ENCODE measurements at regions of chr1 and their contacts with region 1.

Region 1: DNA sequence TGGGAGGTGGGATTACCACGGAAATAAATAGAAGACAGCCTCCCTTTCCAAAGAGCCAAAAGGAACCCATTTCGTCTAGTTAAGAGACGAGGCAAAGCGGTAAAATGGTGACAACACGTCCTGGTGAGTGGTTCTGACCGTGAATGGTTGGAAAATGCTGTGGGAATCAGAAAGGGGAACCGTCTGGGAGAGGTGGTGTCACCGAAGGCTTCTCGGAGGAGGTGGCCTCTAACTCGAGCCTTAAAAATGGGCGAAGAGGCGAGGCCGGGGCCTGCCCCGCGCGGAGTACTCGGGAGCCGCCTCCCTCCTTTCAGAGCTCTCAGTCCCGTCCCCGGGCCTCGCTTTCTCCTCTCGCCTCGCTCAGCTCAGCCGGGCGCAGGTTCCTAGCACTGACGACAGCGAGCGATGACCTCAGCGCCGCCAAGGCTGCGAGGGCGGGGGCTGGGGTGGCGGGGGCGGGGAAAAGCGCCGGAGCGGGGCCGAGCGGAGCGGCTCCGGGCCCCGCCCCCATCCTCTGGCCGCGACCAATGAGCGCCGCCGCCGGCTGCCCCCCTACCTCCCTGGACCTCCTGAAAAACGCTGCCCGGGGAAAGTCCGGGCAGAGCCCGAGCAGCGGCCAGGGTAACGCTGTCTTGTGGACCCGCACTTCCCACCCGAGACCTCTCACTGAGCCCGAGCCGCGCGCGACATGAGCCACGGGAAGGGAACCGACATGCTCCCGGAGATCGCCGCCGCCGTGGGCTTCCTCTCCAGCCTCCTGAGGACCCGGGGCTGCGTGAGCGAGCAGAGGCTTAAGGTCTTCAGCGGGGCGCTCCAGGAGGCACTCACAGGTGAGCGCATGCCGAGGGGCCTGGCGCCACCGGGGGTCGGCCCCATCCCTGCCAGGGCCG is at the start of gene BTG2:
- DNase-seq: peak; percentile 66
- ATAC-seq: peak; percentile 92
- H3K4me3 ChIP-seq: peak within 1 kb of the TSS; percentile 70 to 87 (median 71)
- H3K27ac ChIP-seq: peak within 1 kb of the TSS; percentile 48
- H3K4me1 ChIP-seq: peaks cover 43% of the 10 kb centered on the region
- H3K27me3 ChIP-seq: peaks cover 0 to 23% of the 10 kb centered on the region in 2 experiments; a peak in 3 of 5 replicates
- CTCF ChIP-seq: peak; percentile 21; the same call in 1 of the 2 replicates
- EP300 ChIP-seq: no peak
- POLR2A ChIP-seq: peak; percentile 95 to 99
- RAD21 ChIP-seq: no peak; the same call in 1 of the 2 replicates
- total RNA-seq, gene BTG2: 18.3 and 18.7 TPM in 2 replicates

Region 2: DNA sequence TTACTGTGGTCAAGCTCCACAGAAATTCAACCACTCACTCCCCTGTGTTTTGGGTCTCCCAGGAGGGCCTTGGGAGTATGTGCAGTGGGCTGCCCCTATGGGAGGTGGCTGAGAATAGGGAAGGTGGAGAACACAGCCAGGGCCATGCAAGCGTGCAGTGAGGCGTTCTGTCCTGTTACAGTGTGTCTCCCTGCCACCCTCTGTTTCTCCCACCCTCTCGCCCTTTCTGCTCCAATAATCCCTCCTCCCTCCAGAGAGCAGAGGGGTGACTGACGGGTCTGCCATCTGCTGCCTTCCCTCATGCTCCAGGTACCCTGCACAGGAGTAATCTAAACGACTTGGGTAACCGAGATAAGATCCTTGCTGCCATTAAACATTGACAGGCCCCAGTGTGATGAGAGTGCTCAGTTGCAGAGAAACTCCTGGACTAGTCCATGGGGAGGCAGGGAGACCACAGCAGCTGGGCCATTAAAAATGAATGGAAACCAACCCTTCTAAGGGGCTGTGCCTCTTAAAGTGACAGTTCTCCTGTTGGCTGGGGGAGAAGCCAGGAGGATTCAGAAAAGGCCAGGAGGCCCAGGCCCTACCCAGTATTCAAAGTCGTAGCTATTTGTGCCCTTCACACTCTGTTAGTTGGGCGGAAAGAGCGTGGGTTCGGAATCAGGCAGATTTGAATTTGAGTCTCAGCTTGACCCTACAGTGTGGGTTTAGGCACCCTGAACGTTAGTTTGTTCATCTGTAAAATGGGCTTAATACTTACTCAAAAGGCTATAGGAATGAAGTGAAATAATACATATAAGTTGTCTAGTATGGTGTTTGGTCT is 22.2 kb before region 1 on chr1:
- CTCF ChIA-PET with region 1: no interaction called
- POLR2A ChIA-PET with region 1: interaction called, 77 read pairs
- in situ Hi-C with region 1: no loop called
- intact Hi-C with region 1: no loop called
- DNase-seq: no peak
- ATAC-seq: peak; percentile 82
- H3K4me3 ChIP-seq: peak overlapping the region in 1 of 3 experiments; percentile 53; a peak in 2 of 6 replicates
- H3K27ac ChIP-seq: no peak overlapping the region
- H3K4me1 ChIP-seq: peaks cover 26% of the 10 kb centered on the region
- H3K27me3 ChIP-seq: peaks cover 0 to 46% of the 10 kb centered on the region in 2 experiments; a peak in 4 of 5 replicates
- CTCF ChIP-seq: no peak
- EP300 ChIP-seq: no peak
- POLR2A ChIP-seq: no peak
- RAD21 ChIP-seq: no peak

Region 3: DNA sequence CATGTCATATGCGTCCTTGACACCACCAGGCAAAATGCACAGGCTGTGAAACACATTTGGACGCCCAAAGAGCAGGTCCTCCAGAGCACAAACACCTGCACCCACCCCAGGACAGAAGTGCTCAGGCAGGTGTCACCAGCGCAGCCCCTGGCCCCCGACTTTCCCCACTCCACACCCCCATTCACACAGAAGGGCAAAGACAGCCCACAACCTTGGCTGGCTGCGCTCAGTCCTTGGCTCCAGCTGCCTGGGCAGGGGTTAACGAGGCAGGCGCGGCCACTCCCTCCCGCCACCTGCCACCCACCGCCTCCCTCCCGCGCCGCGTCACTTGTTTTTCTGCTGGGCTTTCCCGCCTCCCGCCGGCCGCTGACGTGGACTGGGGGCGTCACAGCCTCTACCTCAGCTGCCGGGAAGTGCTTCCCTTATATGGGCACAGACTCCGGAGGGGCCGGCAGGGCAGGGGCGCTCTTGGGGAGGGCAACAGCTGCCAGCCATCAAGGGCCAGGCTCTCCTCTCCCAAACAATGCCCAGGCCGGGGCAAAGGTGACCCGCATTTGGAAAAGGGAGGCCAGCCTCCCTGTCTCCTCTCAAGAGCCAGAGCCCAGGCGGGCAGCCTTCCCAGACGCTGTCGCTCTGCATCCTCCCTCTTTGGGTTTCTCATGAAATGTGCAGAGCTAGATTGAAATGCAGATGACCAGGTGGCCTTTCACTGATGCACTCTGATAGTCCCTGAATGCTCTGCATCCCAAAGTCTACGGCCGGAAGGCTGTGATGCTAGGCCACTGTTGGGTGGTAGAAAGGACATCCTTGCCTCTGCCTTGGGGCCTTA is 14.7 kb before region 1 on chr1:
- CTCF ChIA-PET with region 1: no interaction called
- POLR2A ChIA-PET with region 1: interaction called, 77 read pairs
- in situ Hi-C with region 1: no loop called
- intact Hi-C with region 1: no loop called
- DNase-seq: peak; percentile 53
- ATAC-seq: peak; percentile 72
- H3K4me3 ChIP-seq: peak overlapping the region in 2 of 3 experiments; percentile 30 to 53; a peak in 4 of 6 replicates
- H3K27ac ChIP-seq: peak overlapping the region; percentile 32
- H3K4me1 ChIP-seq: peaks cover 36% of the 10 kb centered on the region
- H3K27me3 ChIP-seq: peaks cover 0 to 49% of the 10 kb centered on the region in 2 experiments; a peak in 4 of 5 replicates
- CTCF ChIP-seq: no peak
- EP300 ChIP-seq: no peak; a peak in 1 of 4 replicates
- POLR2A ChIP-seq: no peak
- RAD21 ChIP-seq: no peak

Region 4: GRCh38 chr1:203326830-203327683 is 21.9 kb after region 1 on chr1:
- CTCF ChIA-PET with region 1: no interaction called
- POLR2A ChIA-PET with region 1: interaction called, 31 read pairs
- in situ Hi-C with region 1: no loop called
- intact Hi-C with region 1: no loop called
- DNase-seq: peak; percentile 75
- ATAC-seq: peak; percentile 97
- H3K4me3 ChIP-seq: peak overlapping the region; percentile 55 to 68 (median 56); a peak in 5 of 6 replicates
- H3K27ac ChIP-seq: no peak overlapping the region
- H3K4me1 ChIP-seq: peaks cover 45% of the 10 kb centered on the region
- H3K27me3 ChIP-seq: peaks cover 5 to 18% of the 10 kb centered on the region in 2 experiments; a peak in 1 of 5 replicates
- CTCF ChIP-seq: no peak
- EP300 ChIP-seq: peak in 1 of 2 experiments; percentile 79; a peak in 2 of 4 replicates
- POLR2A ChIP-seq: no peak
- RAD21 ChIP-seq: no peak